Mammary epithelial cell (primary cell): ENCODE measurements at regions of chr1 and their contacts with region 1.

Region 1: GRCh38 chr1:165898837-165899236 is 71.4 kb downstream of the UCK2 start:
- DNase-seq: peak; percentile 95
- H3K4me3 ChIP-seq: no peak overlapping the region
- H3K27ac ChIP-seq: peak overlapping the region; percentile 93
- H3K4me1 ChIP-seq: peaks cover 87% of the 10 kb centered on the region
- H3K27me3 ChIP-seq: no peaks in the 10 kb centered on the region
- CTCF ChIP-seq: no peak

Region 2: GRCh38 chr1:165481820-165482532 is 416.9 kb before region 1 on chr1:
- CTCF ChIA-PET with region 1: no interaction called
- dilution Hi-C with region 1: no loop called
- in situ Hi-C with region 1: no loop called
- intact Hi-C with region 1: loop called (anchors 10 kb)
- DNase-seq: peak; percentile 96
- H3K4me3 ChIP-seq: no peak overlapping the region
- H3K27ac ChIP-seq: no peak overlapping the region
- H3K4me1 ChIP-seq: peaks cover 5% of the 10 kb centered on the region
- H3K27me3 ChIP-seq: peaks cover 10% of the 10 kb centered on the region
- CTCF ChIP-seq: no peak

Region 3: GRCh38 chr1:165666152-165666825 is 232.5 kb before region 1 on chr1:
- CTCF ChIA-PET with region 1: no interaction called
- dilution Hi-C with region 1: no loop called
- in situ Hi-C with region 1: no loop called
- intact Hi-C with region 1: no loop called
- DNase-seq: no peak
- H3K4me3 ChIP-seq: no peak overlapping the region
- H3K27ac ChIP-seq: no peak overlapping the region
- H3K4me1 ChIP-seq: no peaks in the 10 kb centered on the region
- H3K27me3 ChIP-seq: no peaks in the 10 kb centered on the region
- CTCF ChIP-seq: no peak

Region 4: GRCh38 chr1:165738794-165739193 is 160.0 kb before region 1 on chr1:
- CTCF ChIA-PET with region 1: no interaction called
- dilution Hi-C with region 1: no loop called
- in situ Hi-C with region 1: no loop called
- intact Hi-C with region 1: no loop called
- DNase-seq: no peak
- H3K4me3 ChIP-seq: no peak overlapping the region
- H3K27ac ChIP-seq: no peak overlapping the region
- H3K4me1 ChIP-seq: no peaks in the 10 kb centered on the region
- H3K27me3 ChIP-seq: no peaks in the 10 kb centered on the region
- CTCF ChIP-seq: no peak

Region 5: GRCh38 chr1:165768513-165769394 is 130.1 kb before region 1 on chr1 and contains the start of gene TMCO1:
- CTCF ChIA-PET with region 1: interaction called, 3 read pairs
- dilution Hi-C with region 1: no loop called
- in situ Hi-C with region 1: no loop called
- intact Hi-C with region 1: loop called (anchors 2 kb)
- DNase-seq: peak; percentile 97
- H3K4me3 ChIP-seq: peak within 1 kb of the TSS; percentile 66 to 87 (median 82)
- H3K27ac ChIP-seq: peak within 1 kb of the TSS; percentile 88
- H3K4me1 ChIP-seq: peaks cover 27% of the 10 kb centered on the region
- H3K27me3 ChIP-seq: no peaks in the 10 kb centered on the region
- CTCF ChIP-seq: peak in 1 of 2 donors; percentile 33
- total RNA-seq, gene TMCO1: 79.0 to 80.9 TPM

Region 6: GRCh38 chr1:165827268-165828102 is 71.4 kb before region 1 on chr1 and contains the start of gene UCK2:
- CTCF ChIA-PET with region 1: interaction called, 4 read pairs
- dilution Hi-C with region 1: no loop called
- in situ Hi-C with region 1: no loop called
- intact Hi-C with region 1: loop called (anchors 1 kb)
- DNase-seq: peak; percentile 81
- H3K4me3 ChIP-seq: peak within 1 kb of the TSS; percentile 81 to 89 (median 85)
- H3K27ac ChIP-seq: peak within 1 kb of the TSS; percentile 85
- H3K4me1 ChIP-seq: peaks cover 13% of the 10 kb centered on the region
- H3K27me3 ChIP-seq: no peaks in the 10 kb centered on the region
- CTCF ChIP-seq: peak in 1 of 2 donors; percentile 0
- total RNA-seq, gene UCK2: 85.2 to 111 TPM

Region 7: GRCh38 chr1:165857046-165857801 is 41.6 kb before region 1 on chr1:
- CTCF ChIA-PET with region 1: no interaction called
- dilution Hi-C with region 1: no loop called
- in situ Hi-C with region 1: no loop called
- intact Hi-C with region 1: loop called (anchors 5 kb)
- DNase-seq: peak; percentile 22
- H3K4me3 ChIP-seq: no peak overlapping the region
- H3K27ac ChIP-seq: no peak overlapping the region
- H3K4me1 ChIP-seq: peaks cover 40% of the 10 kb centered on the region
- H3K27me3 ChIP-seq: no peaks in the 10 kb centered on the region
- CTCF ChIP-seq: no peak